Caco-2 (cell line): ENCODE measurements at regions of chr3 and their contacts with region 1.

Region 1: GRCh38 chr3:11651900-11652299 is 8.2 kb upstream of the VGLL4 start:
- DNase-seq: peak in 1 of 2 experiments; percentile 23
- H3K4me3 ChIP-seq: no peak overlapping the region
- H3K4me3 Mint-ChIP-seq: no peak overlapping the region
- H3K27ac Mint-ChIP-seq: no peak overlapping the region
- H3K4me1 ChIP-seq: peaks cover 11% of the 10 kb centered on the region
- H3K4me1 Mint-ChIP-seq: peaks cover 11% of the 10 kb centered on the region
- H3K27me3 ChIP-seq: no peaks in the 10 kb centered on the region
- H3K27me3 Mint-ChIP-seq: no peaks in the 10 kb centered on the region
- CTCF ChIP-seq: peak; percentile 24 to 46

Region 2: GRCh38 chr3:11236595-11237461 is 415.1 kb before region 1 on chr3:
- CTCF ChIA-PET with region 1: no interaction called
- POLR2A ChIA-PET with region 1: no interaction called
- intact Hi-C with region 1: loop called (anchors 5 kb)
- DNase-seq: peak; percentile 85 to 91
- H3K4me3 ChIP-seq: no peak overlapping the region
- H3K4me3 Mint-ChIP-seq: no peak overlapping the region
- H3K27ac Mint-ChIP-seq: no peak overlapping the region
- H3K4me1 ChIP-seq: no peaks in the 10 kb centered on the region
- H3K4me1 Mint-ChIP-seq: peaks cover 4% of the 10 kb centered on the region
- H3K27me3 ChIP-seq: no peaks in the 10 kb centered on the region
- H3K27me3 Mint-ChIP-seq: peaks cover 2% of the 10 kb centered on the region
- CTCF ChIP-seq: peak; percentile 85 to 91